GM13977 (cell line): ENCODE measurements at regions of chr20 and their contacts with region 1.

Region 1: GRCh38 chr20:17938871-17939619 is 29.5 kb downstream of the SNX5 start:
- DNase-seq: peak; percentile 74
- CTCF ChIP-seq: peak; percentile 95

Region 2: DNA sequence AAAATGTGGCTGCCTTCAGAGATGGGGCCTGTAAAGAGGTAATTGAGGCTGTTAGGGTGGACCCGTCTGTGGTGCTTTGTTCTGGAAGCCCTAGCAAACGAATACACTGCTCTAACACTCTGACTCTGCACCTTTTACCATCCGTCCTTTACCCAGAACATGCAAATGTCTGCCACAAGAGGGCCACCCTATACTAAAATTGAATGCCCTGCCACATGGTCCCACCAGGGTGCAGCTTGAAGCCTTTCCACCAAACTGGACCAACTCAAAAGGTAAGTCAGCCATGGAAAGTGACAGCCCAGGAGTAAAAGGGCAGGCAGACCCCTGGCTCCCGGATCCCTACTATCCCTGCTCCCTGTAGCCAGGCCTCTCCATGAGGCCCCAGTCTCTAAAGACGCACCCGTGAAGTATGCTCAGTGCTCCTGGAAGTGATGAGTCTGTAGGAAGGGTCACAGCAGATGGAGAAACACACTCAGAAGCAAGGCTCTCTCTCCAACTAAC is 402.1 kb before region 1 on chr20:
- in situ Hi-C with region 1: loop called (anchors 25 kb)
- DNase-seq: peak; percentile 67
- CTCF ChIP-seq: peak; percentile 83

Region 3: GRCh38 chr20:17761604-17762003 is 177.4 kb before region 1 on chr20:
- in situ Hi-C with region 1: no loop called
- DNase-seq: no peak
- CTCF ChIP-seq: no peak